Naive thymus-derived CD4-positive, alpha-beta T cell (primary cell): ENCODE measurements at regions of chr1 and their contacts with region 1.

Region 1: DNA sequence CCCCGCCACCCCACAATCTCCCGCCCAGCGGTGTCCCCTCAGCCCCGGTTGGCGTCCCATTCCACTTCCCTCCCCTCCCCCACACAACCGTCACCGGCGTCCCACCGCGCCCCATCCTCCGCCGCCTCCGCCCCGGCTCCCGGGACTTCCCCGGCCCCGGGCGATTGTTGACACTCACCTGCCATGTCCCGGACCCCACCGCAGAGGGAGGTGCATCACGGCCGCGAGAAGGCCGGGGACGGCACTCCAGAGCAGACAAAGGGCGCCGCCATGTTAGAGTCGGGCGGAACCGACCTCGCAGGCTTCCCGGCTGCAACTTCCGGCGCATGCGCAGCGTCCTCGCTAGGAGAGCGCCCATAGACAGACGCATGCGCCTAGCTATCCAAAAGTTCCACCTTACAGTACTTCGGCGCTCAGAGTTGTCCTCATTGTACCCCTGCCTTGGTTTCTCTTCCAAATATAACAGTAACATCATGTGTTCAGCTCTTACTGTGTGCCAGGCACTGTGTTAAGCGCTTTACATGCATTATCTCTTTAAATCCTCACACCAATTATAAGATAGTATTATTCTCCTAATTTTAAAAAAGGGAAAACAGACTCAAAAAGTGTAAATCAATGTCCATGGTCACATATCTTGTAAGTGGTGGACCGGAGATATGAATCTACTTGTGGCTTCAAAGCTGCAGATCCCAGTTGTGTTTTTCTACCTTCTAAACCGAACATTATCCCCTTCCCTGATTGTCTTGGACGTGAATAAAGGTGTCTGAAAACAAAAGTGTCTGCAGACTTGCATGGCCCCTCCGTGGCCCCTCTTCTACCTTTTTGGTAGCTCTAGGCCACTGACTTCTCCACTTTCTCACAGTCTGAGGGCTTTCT is at the start of gene ZBTB17:
- DNase-seq: peak; percentile 90 to 95 (median 94)
- ATAC-seq: peak; percentile 96
- H3K4me3 ChIP-seq: peak within 1 kb of the TSS; percentile 76
- H3K4me3 Mint-ChIP-seq: peak within 1 kb of the TSS; percentile 82 to 94 (median 90)
- H3K27ac ChIP-seq: peak within 1 kb of the TSS; percentile 83
- H3K27ac Mint-ChIP-seq: peak within 1 kb of the TSS; percentile 82 to 95 (median 92)
- H3K4me1 ChIP-seq: peaks cover 12 to 17% of the 10 kb centered on the region in 2 donors
- H3K4me1 Mint-ChIP-seq: peaks cover 21 to 46% (median 38%) of the 10 kb centered on the region in 7 donors
- H3K27me3 ChIP-seq: no peaks in the 10 kb centered on the region
- H3K27me3 Mint-ChIP-seq: no peaks in the 10 kb centered on the region
- total RNA-seq, gene ZBTB17: 47.3 to 85.1 (median 65.0) TPM

Region 2: GRCh38 chr1:15957228-15958095 is 18.6 kb before region 1 on chr1:
- CTCF ChIA-PET with region 1: no interaction called
- POLR2A ChIA-PET with region 1: interaction called, 11 read pairs
- intact Hi-C with region 1: no loop called
- DNase-seq: no peak
- ATAC-seq: no peak
- H3K4me3 ChIP-seq: no peak overlapping the region
- H3K4me3 Mint-ChIP-seq: peak overlapping the region in 2 of 10 donors; percentile 1 to 35
- H3K27ac ChIP-seq: no peak overlapping the region
- H3K27ac Mint-ChIP-seq: peak overlapping the region in 5 of 9 donors; percentile 2 to 80 (median 38)
- H3K4me1 ChIP-seq: peaks cover 4 to 42% of the 10 kb centered on the region in 2 donors
- H3K4me1 Mint-ChIP-seq: peaks cover 45 to 87% (median 76%) of the 10 kb centered on the region in 7 donors
- H3K27me3 ChIP-seq: no peaks in the 10 kb centered on the region
- H3K27me3 Mint-ChIP-seq: no peaks in the 10 kb centered on the region